CD4-positive, alpha-beta T cell (primary cell): ENCODE measurements at regions of chr11 and their contacts with region 1.

Region 1: DNA sequence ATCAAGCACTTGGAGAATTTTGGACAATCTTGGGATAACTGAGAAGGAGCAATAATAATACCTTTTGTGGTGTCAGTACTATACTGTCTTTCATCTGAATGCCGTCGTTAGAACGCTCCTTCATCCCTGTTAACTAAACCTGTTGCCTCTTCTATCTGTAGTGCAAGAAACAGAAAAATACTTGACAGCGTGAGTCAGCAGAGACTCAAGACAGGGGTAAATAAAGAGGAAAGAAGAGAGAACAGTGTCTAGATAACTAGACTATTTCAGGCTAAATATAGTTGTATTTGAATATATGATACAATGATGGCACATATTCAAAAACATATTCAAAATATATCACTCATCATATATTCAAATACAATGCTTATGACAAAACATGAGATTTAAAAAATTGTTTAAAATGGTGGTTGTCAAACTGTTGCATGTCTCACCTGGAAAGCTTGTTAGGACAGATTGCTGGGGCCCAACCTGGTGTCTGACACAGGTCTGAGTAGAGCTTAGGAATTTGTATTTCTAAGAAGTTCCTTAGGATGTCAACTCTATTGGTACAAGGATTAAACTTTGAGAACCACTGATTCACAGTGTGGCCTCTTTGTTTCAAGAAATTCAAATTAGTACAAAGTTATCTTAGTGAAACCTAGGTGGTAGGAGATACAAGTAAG is 17.4 kb downstream of the OOSP4A start:
- DNase-seq: no peak
- ATAC-seq: no peak
- H3K4me3 ChIP-seq: no peak overlapping the region
- H3K4me3 Mint-ChIP-seq: no peak overlapping the region
- H3K27ac ChIP-seq: no peak overlapping the region
- H3K27ac Mint-ChIP-seq: no peak overlapping the region
- H3K4me1 ChIP-seq: no peaks in the 10 kb centered on the region
- H3K4me1 Mint-ChIP-seq: no peaks in the 10 kb centered on the region
- H3K27me3 ChIP-seq: peaks cover 0 to 3% of the 10 kb centered on the region in 2 experiments
- H3K27me3 Mint-ChIP-seq: peaks cover 1% of the 10 kb centered on the region
- CTCF ChIP-seq: no peak

Region 2: DNA sequence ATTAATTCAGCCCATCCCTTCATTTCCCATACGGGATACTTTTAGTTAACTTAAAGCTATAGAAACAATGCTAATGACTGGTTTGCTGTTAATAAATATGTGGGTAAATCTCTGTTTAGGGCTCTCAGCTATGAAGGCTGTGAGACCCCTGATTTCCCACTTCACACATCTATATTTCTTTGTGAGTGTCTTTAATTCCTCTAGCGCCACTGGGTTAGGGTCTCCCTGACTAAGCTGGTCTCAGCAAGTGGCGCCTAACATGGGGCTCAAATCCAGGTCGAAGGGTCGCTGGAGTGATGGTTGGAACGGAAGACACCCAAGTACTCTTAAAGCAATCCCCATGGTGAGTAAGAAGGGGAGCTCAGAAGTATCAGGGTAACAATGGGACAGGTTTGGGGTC is 57.4 kb before region 1 on chr11:
- CTCF ChIA-PET with region 1: no interaction called
- POLR2A ChIA-PET with region 1: no interaction called
- intact Hi-C with region 1: loop called in 1 of 2 experiments (anchors 10 kb)
- DNase-seq: peak in 1 of 14 experiments; percentile 2
- ATAC-seq: no peak
- H3K4me3 ChIP-seq: no peak overlapping the region
- H3K4me3 Mint-ChIP-seq: no peak overlapping the region
- H3K27ac ChIP-seq: no peak overlapping the region
- H3K27ac Mint-ChIP-seq: no peak overlapping the region
- H3K4me1 ChIP-seq: no peaks in the 10 kb centered on the region
- H3K4me1 Mint-ChIP-seq: no peaks in the 10 kb centered on the region
- H3K27me3 ChIP-seq: no peaks in the 10 kb centered on the region
- H3K27me3 Mint-ChIP-seq: peaks cover 4% of the 10 kb centered on the region
- CTCF ChIP-seq: no peak

Region 3: GRCh38 chr11:59953463-59954218 is 27.6 kb before region 1 on chr11:
- CTCF ChIA-PET with region 1: no interaction called
- POLR2A ChIA-PET with region 1: no interaction called
- intact Hi-C with region 1: loop called in 1 of 2 experiments (anchors 1 kb)
- DNase-seq: no peak
- ATAC-seq: no peak
- H3K4me3 ChIP-seq: no peak overlapping the region
- H3K4me3 Mint-ChIP-seq: no peak overlapping the region
- H3K27ac ChIP-seq: no peak overlapping the region
- H3K27ac Mint-ChIP-seq: no peak overlapping the region
- H3K4me1 ChIP-seq: no peaks in the 10 kb centered on the region
- H3K4me1 Mint-ChIP-seq: no peaks in the 10 kb centered on the region
- H3K27me3 ChIP-seq: no peaks in the 10 kb centered on the region
- H3K27me3 Mint-ChIP-seq: peaks cover 4% of the 10 kb centered on the region
- CTCF ChIP-seq: no peak

Region 4: DNA sequence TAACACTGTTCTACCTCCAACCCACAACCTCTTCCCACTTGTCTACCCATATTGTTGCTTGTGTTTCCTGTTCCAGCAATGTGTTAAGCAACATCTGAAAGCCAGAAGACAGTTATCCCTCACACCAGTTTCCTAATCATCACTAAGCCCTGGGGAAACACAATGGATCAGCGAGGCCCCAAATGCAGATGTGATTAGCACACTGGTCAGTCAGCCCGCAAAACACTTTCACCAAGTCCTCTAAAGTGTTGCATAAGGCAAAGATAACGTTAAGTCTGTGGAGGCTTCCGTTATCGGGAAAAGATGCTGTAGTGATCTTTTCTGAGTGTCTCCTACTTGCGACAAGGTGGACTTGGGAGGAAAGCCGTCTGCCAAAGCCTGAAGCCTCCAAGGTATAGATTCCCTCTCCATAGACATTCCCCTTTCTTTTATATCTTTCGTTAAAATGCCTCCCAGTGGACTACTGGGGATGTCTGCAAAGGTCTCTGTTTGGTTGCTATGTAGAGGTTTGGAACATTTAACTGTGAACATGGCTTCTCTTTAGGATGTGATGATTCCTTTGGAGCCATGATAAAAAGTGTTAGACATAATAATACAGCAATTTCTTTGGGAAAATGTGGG is 75.2 kb after region 1 on chr11 and contains the start of gene MS4A3:
- CTCF ChIA-PET with region 1: no interaction called
- POLR2A ChIA-PET with region 1: no interaction called
- intact Hi-C with region 1: no loop called
- DNase-seq: no peak
- ATAC-seq: no peak
- H3K4me3 ChIP-seq: no peak within 1 kb of the TSS
- H3K4me3 Mint-ChIP-seq: no peak within 1 kb of the TSS
- H3K27ac ChIP-seq: no peak within 1 kb of the TSS
- H3K27ac Mint-ChIP-seq: no peak within 1 kb of the TSS
- H3K4me1 ChIP-seq: no peaks in the 10 kb centered on the region
- H3K4me1 Mint-ChIP-seq: no peaks in the 10 kb centered on the region
- H3K27me3 ChIP-seq: no peaks in the 10 kb centered on the region
- H3K27me3 Mint-ChIP-seq: no peaks in the 10 kb centered on the region
- CTCF ChIP-seq: no peak
- total RNA-seq, gene MS4A3: not detected

Region 5: GRCh38 chr11:61417670-61418069 is 1436.4 kb after region 1 on chr11:
- CTCF ChIA-PET with region 1: no interaction called
- POLR2A ChIA-PET with region 1: no interaction called
- intact Hi-C with region 1: no loop called
- DNase-seq: peak in 2 of 14 experiments; percentile 40 to 53
- ATAC-seq: no peak
- H3K4me3 ChIP-seq: no peak overlapping the region
- H3K4me3 Mint-ChIP-seq: no peak overlapping the region
- H3K27ac ChIP-seq: no peak overlapping the region
- H3K27ac Mint-ChIP-seq: peak overlapping the region; percentile 6
- H3K4me1 ChIP-seq: peaks cover 12% of the 10 kb centered on the region
- H3K4me1 Mint-ChIP-seq: peaks cover 40% of the 10 kb centered on the region
- H3K27me3 ChIP-seq: no peaks in the 10 kb centered on the region
- H3K27me3 Mint-ChIP-seq: no peaks in the 10 kb centered on the region
- CTCF ChIP-seq: no peak